Activated T-helper 2 cell treated with anti-CD3 and anti-CD28 coated beads, Interferon-gamma antibody, Interleukin-2, Interleukin-4, amounts not matched to agents 10 μg/mL and 5 μg/mL and 100 μg/mL, durations not matched to agents 14 hours and 24 hours and 36 hours (primary cell): ENCODE measurements at regions of chr7 and their contacts with region 1.

Region 1: DNA sequence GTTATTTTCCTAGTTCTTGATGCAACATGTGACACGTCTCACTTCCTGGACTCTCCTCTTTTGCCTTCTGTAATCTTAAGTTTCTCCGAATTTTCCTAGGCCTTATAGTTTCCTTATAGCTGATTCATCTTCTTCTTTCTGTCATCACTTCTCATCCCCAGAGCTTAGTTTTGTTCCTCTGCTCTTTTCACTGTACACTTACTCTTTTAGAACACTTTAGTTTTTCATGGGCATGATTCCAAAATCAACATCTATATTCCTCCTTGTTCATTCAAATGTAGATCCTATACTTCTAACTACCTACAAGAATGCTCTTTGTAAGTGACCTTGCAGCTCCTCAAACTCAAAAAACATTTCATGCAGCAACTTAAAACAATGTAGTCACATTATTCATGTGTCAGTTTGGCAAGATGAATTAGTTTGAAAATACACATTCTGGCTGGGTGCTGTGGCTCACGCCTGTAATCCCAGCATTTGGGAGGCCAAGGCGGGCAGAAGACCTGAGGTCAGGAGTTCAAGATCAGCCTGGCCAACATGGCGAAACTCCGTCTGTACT is 13.1 kb upstream of the SLC26A3 start:
- DNase-seq: no peak
- H3K4me3 Mint-ChIP-seq: no peak overlapping the region
- H3K27ac Mint-ChIP-seq: peak overlapping the region; percentile 75
- H3K4me1 Mint-ChIP-seq: peaks cover 21% of the 10 kb centered on the region
- H3K27me3 Mint-ChIP-seq: peaks cover 2% of the 10 kb centered on the region

Region 2: GRCh38 chr7:107773027-107773426 is 43.1 kb before region 1 on chr7:
- intact Hi-C with region 1: loop called (anchors 5 kb)
- DNase-seq: no peak
- H3K4me3 Mint-ChIP-seq: no peak overlapping the region
- H3K27ac Mint-ChIP-seq: no peak overlapping the region
- H3K4me1 Mint-ChIP-seq: peaks cover 13% of the 10 kb centered on the region
- H3K27me3 Mint-ChIP-seq: peaks cover 2% of the 10 kb centered on the region

Region 3: DNA sequence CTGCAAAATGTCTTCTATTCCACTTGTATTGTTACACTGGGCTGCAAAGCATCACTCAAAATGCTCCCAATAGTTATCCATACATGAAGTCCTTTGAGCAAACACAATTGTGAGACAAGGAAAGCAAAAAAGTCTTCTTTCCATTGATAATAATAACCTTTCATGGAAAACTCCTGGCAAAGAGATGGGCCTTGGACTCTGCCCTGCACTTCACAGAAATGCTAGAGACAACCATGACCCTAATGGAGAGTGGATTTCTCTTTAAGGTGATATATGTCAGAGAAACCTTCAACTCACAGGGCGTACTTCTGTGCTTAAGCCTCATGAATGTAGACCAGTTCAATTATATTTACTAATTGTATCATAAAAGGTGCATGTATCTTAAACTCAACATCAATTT is 32.4 kb before region 1 on chr7:
- intact Hi-C with region 1: no loop called
- DNase-seq: no peak
- H3K4me3 Mint-ChIP-seq: no peak overlapping the region
- H3K27ac Mint-ChIP-seq: no peak overlapping the region
- H3K4me1 Mint-ChIP-seq: peaks cover 11% of the 10 kb centered on the region
- H3K27me3 Mint-ChIP-seq: peaks cover 4% of the 10 kb centered on the region

Region 4: DNA sequence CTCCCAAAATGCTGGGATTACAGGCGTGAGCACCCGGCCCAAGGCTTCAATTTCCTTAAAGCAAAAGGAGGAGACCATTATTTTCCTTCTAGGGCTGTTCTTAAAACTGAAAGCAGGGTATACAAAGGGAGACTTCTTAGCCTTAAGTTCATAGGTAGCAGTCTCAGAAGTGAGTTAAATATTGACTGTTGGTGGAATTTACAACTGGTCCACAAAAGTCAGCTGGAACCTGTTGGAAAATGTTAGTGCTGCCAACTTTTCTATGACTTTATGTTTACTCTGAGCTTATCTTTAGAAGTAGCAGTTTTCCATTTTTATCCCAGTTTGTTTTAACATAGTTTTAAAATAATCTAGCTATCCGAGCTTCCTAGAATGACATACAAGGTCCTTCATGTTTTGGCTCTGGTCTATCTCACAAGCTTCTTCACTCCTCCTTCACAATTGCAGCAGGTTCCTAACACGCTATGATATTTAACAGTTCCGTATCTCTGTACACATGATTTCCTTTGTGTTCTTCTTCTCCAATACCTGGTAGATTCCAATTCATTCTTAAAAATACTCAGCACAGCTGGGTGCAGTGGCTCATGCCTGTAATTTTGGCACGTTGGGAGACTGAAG is 16.3 kb before region 1 on chr7:
- intact Hi-C with region 1: no loop called
- DNase-seq: no peak
- H3K4me3 Mint-ChIP-seq: no peak overlapping the region
- H3K27ac Mint-ChIP-seq: no peak overlapping the region
- H3K4me1 Mint-ChIP-seq: no peaks in the 10 kb centered on the region
- H3K27me3 Mint-ChIP-seq: peaks cover 17% of the 10 kb centered on the region

Region 5: DNA sequence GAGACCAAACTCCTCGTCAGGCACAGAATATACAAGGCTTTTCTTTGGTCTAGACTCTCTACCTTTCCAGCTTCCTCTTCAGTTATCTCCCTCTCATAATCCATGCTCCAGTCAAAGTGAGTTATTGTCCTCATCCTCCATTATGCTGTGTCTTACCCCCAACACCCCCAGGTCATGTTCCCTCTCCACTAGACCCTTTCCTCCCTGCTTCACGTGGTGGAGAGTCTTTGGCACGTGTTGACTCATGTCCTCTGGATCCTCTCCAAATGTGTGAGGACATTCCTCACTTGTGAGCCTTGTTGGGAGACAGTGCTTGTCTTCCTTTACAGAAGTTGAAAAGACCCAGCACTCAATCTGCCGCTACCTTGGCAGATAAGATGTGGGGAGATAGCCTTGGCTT is 38.9 kb after region 1 on chr7:
- intact Hi-C with region 1: no loop called
- DNase-seq: no peak
- H3K4me3 Mint-ChIP-seq: no peak overlapping the region
- H3K27ac Mint-ChIP-seq: no peak overlapping the region
- H3K4me1 Mint-ChIP-seq: peaks cover 20% of the 10 kb centered on the region
- H3K27me3 Mint-ChIP-seq: peaks cover 2% of the 10 kb centered on the region

Region 6: DNA sequence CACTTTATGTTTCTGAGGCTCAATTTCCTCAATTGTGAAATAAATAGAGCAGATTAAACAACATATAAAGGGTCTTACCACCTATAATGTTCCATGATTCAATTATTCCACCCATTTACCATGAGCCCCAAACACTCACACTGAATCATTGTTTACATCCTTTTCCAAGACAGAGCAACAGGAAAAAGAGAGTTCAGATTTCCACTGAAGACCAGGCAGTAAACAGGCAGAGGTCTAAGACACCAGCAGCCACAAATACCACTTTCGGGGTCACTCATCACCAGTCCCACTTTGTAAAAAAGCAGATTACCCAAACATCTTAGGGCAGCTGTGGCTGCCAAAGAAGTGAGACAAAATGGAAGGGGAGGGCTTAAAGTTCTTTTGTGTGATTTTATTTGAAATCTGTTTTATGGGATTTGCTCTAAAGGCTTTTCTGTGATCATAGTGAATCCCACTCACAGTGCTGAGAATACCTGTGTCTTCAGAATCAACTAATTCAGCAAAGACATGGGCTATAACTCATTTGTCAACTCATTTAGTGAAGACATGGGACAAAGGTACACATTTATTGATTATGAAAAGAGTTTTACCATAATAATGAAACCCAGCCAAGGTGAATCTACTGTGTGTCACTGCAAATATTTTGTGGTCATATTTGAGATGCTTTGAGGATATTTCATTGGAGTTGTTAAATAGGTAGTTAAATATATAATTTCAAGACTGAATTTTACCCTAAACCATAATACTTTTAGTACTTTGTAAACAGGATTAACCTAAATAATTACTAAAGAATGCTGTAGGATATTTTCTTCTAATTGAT is 50.1 kb after region 1 on chr7:
- intact Hi-C with region 1: loop called (anchors 1 kb)
- DNase-seq: no peak
- H3K4me3 Mint-ChIP-seq: no peak overlapping the region
- H3K27ac Mint-ChIP-seq: peak overlapping the region; percentile 35
- H3K4me1 Mint-ChIP-seq: peaks cover 19% of the 10 kb centered on the region
- H3K27me3 Mint-ChIP-seq: no peaks in the 10 kb centered on the region

Region 7: GRCh38 chr7:107890962-107891635 is 75.0 kb after region 1 on chr7 and contains the start of gene DLD:
- intact Hi-C with region 1: no loop called
- DNase-seq: peak; percentile 92
- H3K4me3 Mint-ChIP-seq: peak within 1 kb of the TSS; percentile 93
- H3K27ac Mint-ChIP-seq: peak within 1 kb of the TSS; percentile 99
- H3K4me1 Mint-ChIP-seq: peaks cover 45% of the 10 kb centered on the region
- H3K27me3 Mint-ChIP-seq: no peaks in the 10 kb centered on the region
- total RNA-seq, gene DLD: 104 and 108 TPM in 2 replicates